ENCODE measurements at regions of chr2 and their contacts with region 1.

Region 1: GRCh38 chr2:201275990-201276389 is 15.7 kb downstream of the CASP8 start:
- DNase-seq: no peak
- ATAC-seq: peak; percentile 39; the same call in 2 of the 3 replicates
- H3K4me3 ChIP-seq: no peak overlapping the region
- H3K27ac ChIP-seq: no peak overlapping the region
- H3K4me1 ChIP-seq: no peaks in the 10 kb centered on the region
- H3K27me3 ChIP-seq: no peaks in the 10 kb centered on the region
- CTCF ChIP-seq: peak in 2 of 3 experiments; percentile 1 to 5; a peak in 1 of 6 replicates
- EP300 ChIP-seq: no peak
- POLR2A ChIP-seq: no peak
- RAD21 ChIP-seq: no peak

Region 2: GRCh38 chr2:201263779-201264178 is 12.2 kb before region 1 on chr2:
- CTCF ChIA-PET with region 1: interaction called, 24 read pairs
- POLR2A ChIA-PET with region 1: interaction called, 6 read pairs
- RAD21 ChIA-PET with region 1: no interaction called
- SMC1A ChIA-PET with region 1: interaction called, 11 read pairs
- in situ Hi-C with region 1: no loop called
- intact Hi-C with region 1: no loop called
- DNase-seq: no peak
- ATAC-seq: peak; percentile 37
- H3K4me3 ChIP-seq: no peak overlapping the region
- H3K27ac ChIP-seq: no peak overlapping the region
- H3K4me1 ChIP-seq: peaks cover 20% of the 10 kb centered on the region
- H3K27me3 ChIP-seq: no peaks in the 10 kb centered on the region
- CTCF ChIP-seq: no peak
- EP300 ChIP-seq: no peak
- POLR2A ChIP-seq: no peak
- RAD21 ChIP-seq: no peak

Region 3: DNA sequence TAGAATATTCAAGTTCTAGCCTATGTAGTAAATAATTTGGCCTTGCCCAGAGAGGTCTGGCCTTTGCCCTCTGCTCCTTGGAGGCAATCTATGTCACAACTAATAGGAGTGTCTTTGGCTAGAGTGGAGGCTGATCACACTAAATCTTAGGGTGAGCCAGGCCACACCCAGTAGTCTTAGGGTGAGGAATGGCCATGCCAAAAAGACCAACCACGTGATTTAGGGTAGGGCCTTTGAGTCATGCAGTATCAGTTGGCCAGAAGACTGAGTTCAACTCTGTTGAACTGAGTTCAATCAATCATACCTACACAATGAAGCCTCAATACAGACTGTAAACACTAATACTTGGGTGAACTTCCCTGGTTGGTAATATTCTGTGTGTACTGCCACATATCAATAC is 107.2 kb after region 1 on chr2:
- CTCF ChIA-PET with region 1: no interaction called
- POLR2A ChIA-PET with region 1: no interaction called
- RAD21 ChIA-PET with region 1: no interaction called
- SMC1A ChIA-PET with region 1: no interaction called
- in situ Hi-C with region 1: no loop called
- intact Hi-C with region 1: no loop called
- DNase-seq: no peak
- ATAC-seq: no peak
- H3K4me3 ChIP-seq: no peak overlapping the region
- H3K27ac ChIP-seq: no peak overlapping the region
- H3K4me1 ChIP-seq: no peaks in the 10 kb centered on the region
- H3K27me3 ChIP-seq: no peaks in the 10 kb centered on the region
- CTCF ChIP-seq: no peak
- EP300 ChIP-seq: no peak
- POLR2A ChIP-seq: no peak
- RAD21 ChIP-seq: no peak

Measured in GM12878 (cell line).